CD14-positive monocyte (primary cell): ENCODE measurements at regions of chr20 and their contacts with region 1.

Region 1: GRCh38 chr20:31951530-31952453 is at the start of gene PDRG1:
- DNase-seq: peak; percentile 93 to 96 (median 94)
- H3K4me3 ChIP-seq: peak within 1 kb of the TSS; percentile 86 to 93 (median 86)
- H3K4me3 Mint-ChIP-seq: peak within 1 kb of the TSS; percentile 96 to 99
- H3K27ac ChIP-seq: peak within 1 kb of the TSS in 1 of 2 donors; percentile 74
- H3K27ac Mint-ChIP-seq: peak within 1 kb of the TSS; percentile 82 to 95 (median 92)
- H3K4me1 ChIP-seq: peaks cover 12 to 13% of the 10 kb centered on the region in 2 donors
- H3K4me1 Mint-ChIP-seq: peaks cover 16% of the 10 kb centered on the region
- H3K27me3 ChIP-seq: peaks cover 0 to 6% of the 10 kb centered on the region in 2 donors
- H3K27me3 Mint-ChIP-seq: peaks cover 8 to 15% (median 14%) of the 10 kb centered on the region in 3 donors
- CTCF ChIP-seq: peak; percentile 85
- polyA plus RNA-seq, gene PDRG1: 3.5 to 4.4 (median 3.7) TPM

Region 2: DNA sequence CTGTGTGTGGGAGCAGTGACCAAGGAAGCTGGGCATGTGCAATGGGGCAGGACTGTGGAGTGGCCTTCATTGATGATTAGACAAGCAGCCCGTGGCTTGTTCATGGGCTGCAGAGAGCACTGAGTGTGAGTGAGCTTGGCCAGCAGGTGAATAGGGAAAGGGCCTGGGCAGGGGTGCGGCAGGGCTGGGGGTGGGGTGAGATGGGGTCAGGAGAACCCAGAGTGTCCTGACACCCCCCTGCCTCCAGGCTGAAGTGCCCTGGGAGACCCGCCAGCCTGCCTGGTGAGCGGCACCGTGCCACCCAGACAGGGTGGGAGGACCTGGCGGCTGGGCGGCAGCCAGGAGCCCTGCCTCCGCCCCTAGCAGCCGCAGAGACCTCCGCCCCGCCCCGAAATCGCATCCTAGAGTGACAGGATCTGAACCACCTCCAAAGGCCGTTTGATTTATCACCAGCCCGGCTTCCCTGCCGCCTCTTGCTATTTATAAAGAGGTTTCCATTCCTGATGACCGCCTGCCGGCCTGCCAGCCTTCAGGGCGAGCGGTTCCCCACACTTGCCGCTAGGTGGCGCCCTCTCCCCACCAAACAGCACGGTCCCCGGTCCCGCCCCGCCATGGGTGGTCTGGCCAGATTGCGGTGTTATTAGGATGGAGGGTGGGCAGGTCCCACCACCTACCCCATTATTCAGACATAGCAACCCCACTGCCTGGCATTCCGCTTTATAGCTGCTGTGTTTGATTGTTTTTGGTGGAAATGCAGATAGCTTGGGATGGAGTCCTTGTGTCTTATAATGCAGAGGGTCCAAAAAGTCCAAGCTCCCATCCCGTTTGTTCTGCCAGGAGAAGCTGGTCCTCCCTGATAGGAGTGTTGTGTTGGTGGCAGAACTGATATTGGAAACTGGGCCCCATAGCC is 129.1 kb before region 1 on chr20:
- intact Hi-C with region 1: loop called in 1 of 2 experiments (anchors 5 kb)
- DNase-seq: peak; percentile 54 to 68 (median 60)
- H3K4me3 ChIP-seq: no peak overlapping the region
- H3K4me3 Mint-ChIP-seq: peak overlapping the region; percentile 24 to 74
- H3K27ac ChIP-seq: no peak overlapping the region
- H3K27ac Mint-ChIP-seq: no peak overlapping the region
- H3K4me1 ChIP-seq: peaks cover 3 to 9% of the 10 kb centered on the region in 2 donors
- H3K4me1 Mint-ChIP-seq: peaks cover 4% of the 10 kb centered on the region
- H3K27me3 ChIP-seq: peaks cover 0 to 6% of the 10 kb centered on the region in 2 donors
- H3K27me3 Mint-ChIP-seq: peaks cover 2 to 8% (median 3%) of the 10 kb centered on the region in 3 donors
- CTCF ChIP-seq: peak; percentile 98

Region 3: GRCh38 chr20:31835977-31836852 is 115.6 kb before region 1 on chr20:
- intact Hi-C with region 1: no loop called
- DNase-seq: peak; percentile 77 to 90 (median 81)
- H3K4me3 ChIP-seq: peak overlapping the region in 1 of 3 experiments; percentile 54
- H3K4me3 Mint-ChIP-seq: peak overlapping the region in 1 of 2 donors; percentile 76
- H3K27ac ChIP-seq: peak overlapping the region in 1 of 2 donors; percentile 45
- H3K27ac Mint-ChIP-seq: peak overlapping the region in 3 of 7 donors; percentile 35 to 77 (median 53)
- H3K4me1 ChIP-seq: peaks cover 42 to 50% of the 10 kb centered on the region in 2 donors
- H3K4me1 Mint-ChIP-seq: no peaks in the 10 kb centered on the region
- H3K27me3 ChIP-seq: peaks cover 0 to 47% of the 10 kb centered on the region in 2 donors
- H3K27me3 Mint-ChIP-seq: peaks cover 13 to 47% (median 38%) of the 10 kb centered on the region in 3 donors
- CTCF ChIP-seq: no peak

Region 4: DNA sequence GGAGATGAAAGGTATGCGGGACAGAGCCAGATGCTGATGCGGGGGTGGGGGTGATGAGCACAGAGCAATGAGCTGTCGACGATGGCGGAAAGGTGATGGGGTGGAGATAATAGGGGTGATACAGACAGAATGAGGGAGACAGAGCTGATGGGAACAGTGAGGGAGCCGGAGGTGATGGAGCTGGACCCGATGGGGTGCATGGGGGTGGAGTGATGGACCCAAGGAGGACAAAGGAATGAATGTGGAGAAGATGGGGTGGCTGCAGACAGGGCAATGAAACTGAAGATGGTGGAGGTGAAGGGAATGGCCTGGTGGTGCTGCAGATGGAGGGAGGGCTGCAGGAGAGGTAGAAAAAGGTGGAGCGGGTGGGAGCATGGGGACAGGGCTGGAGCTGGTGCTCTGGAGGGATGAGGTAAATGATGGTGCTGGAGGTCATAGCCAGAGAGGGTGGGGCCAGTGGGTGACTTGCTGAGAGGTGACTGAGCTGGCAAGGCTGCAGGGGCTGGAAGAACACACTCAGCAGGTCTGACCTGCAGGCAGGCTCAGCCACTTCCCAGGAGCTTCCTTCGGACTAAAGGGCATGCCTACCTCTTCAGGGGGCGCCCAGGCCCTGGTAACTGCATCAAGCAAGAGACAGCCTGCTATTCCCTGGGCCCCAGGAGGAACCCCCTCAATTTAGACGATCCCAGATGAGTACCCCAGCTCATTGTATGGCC is 100.4 kb before region 1 on chr20:
- intact Hi-C with region 1: loop called (anchors 5 kb)
- DNase-seq: no peak
- H3K4me3 ChIP-seq: no peak overlapping the region
- H3K4me3 Mint-ChIP-seq: no peak overlapping the region
- H3K27ac ChIP-seq: no peak overlapping the region
- H3K27ac Mint-ChIP-seq: no peak overlapping the region
- H3K4me1 ChIP-seq: peaks cover 0 to 1% of the 10 kb centered on the region in 2 donors
- H3K4me1 Mint-ChIP-seq: no peaks in the 10 kb centered on the region
- H3K27me3 ChIP-seq: peaks cover 0 to 18% of the 10 kb centered on the region in 2 donors
- H3K27me3 Mint-ChIP-seq: peaks cover 19 to 28% (median 23%) of the 10 kb centered on the region in 3 donors
- CTCF ChIP-seq: no peak

Region 5: GRCh38 chr20:31879143-31879987 is 72.4 kb before region 1 on chr20:
- intact Hi-C with region 1: loop called in 1 of 2 experiments (anchors 5 kb)
- DNase-seq: peak; percentile 92 to 97 (median 96)
- H3K4me3 ChIP-seq: peak overlapping the region; percentile 45 to 74 (median 49)
- H3K4me3 Mint-ChIP-seq: peak overlapping the region; percentile 92 to 96
- H3K27ac ChIP-seq: peak overlapping the region in 1 of 2 donors; percentile 57
- H3K27ac Mint-ChIP-seq: peak overlapping the region; percentile 76 to 95 (median 94)
- H3K4me1 ChIP-seq: peaks cover 8 to 14% of the 10 kb centered on the region in 2 donors
- H3K4me1 Mint-ChIP-seq: peaks cover 17% of the 10 kb centered on the region
- H3K27me3 ChIP-seq: no peaks in the 10 kb centered on the region
- H3K27me3 Mint-ChIP-seq: peaks cover 4 to 6% (median 4%) of the 10 kb centered on the region in 3 donors
- CTCF ChIP-seq: no peak

Region 6: GRCh38 chr20:32077190-32077589 is 125.4 kb after region 1 on chr20:
- intact Hi-C with region 1: no loop called
- DNase-seq: peak in 2 of 3 donors; percentile 40 to 44
- H3K4me3 ChIP-seq: no peak overlapping the region
- H3K4me3 Mint-ChIP-seq: no peak overlapping the region
- H3K27ac ChIP-seq: peak overlapping the region; percentile 58 to 74
- H3K27ac Mint-ChIP-seq: peak overlapping the region; percentile 52 to 90 (median 81)
- H3K4me1 ChIP-seq: peaks cover 47 to 70% of the 10 kb centered on the region in 2 donors
- H3K4me1 Mint-ChIP-seq: peaks cover 48% of the 10 kb centered on the region
- H3K27me3 ChIP-seq: no peaks in the 10 kb centered on the region
- H3K27me3 Mint-ChIP-seq: peaks cover 0 to 2% (median 0%) of the 10 kb centered on the region in 3 donors
- CTCF ChIP-seq: no peak